HepG2 (cell line): ENCODE measurements at regions of chr3 and their contacts with region 1.

Region 1: GRCh38 chr3:149366941-149367840 is 10.3 kb downstream of the TM4SF1 start:
- DNase-seq: peak; percentile 88
- ATAC-seq: peak; percentile 89
- H3K4me3 ChIP-seq: no peak overlapping the region
- H3K27ac ChIP-seq: peak overlapping the region; percentile 67
- H3K4me1 ChIP-seq: peaks cover 81% of the 10 kb centered on the region
- H3K27me3 ChIP-seq: no peaks in the 10 kb centered on the region
- CTCF ChIP-seq: no peak
- EP300 ChIP-seq: 0 out of 4 replicates have a peak, but pooled peaks of 1 of the 2 experiments have one; percentile 10
- POLR2A ChIP-seq: peak in 1 of 2 experiments; percentile 72; a peak in 1 of 4 replicates
- RAD21 ChIP-seq: no peak

Region 2: DNA sequence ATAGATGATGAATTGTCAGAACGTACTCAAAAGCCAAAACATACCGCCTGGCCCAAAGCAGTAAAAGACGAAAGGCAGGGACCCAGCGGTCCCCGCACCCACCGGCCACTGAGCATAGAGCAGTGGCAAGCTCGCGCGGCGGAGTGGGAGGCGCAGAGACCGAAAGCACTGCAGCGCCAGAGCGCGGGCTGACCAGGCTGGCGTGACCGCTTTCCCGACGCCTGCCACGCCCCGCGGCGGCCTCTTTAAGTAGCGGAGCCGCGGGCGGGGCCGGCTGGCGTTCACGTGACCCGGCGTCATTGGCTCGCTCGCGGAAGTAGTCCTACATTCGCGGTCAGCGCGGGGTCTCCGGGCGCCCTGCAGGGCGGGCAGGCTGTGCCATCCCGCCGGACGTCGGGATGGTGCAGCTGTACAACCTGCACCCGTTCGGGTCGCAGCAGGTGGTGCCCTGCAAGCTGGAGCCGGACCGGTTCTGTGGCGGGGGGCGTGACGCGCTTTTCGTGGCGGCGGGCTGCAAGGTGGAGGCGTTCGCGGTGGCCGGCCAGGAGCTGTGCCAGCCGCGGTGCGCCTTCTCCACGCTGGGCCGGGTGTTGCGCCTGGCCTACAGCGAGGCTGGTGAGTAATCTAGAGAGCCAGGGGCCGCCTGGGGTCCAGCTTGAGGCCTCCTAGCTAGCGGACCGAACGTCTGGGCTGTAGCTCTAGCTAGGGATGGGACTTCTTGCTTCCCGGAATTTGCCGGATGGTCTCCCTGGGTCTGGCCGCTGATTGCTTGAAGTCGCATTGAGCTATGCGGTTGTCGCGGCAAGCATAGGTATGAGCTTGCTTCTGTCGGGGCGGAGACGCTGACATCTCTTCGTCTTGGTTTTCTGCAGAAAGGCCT is 237.6 kb before region 1 on chr3 and contains the start of gene HPS3:
- CTCF ChIA-PET with region 1: no interaction called
- POLR2A ChIA-PET with region 1: no interaction called
- in situ Hi-C with region 1: no loop called
- intact Hi-C with region 1: loop called (anchors 1 kb)
- DNase-seq: peak; percentile 79
- ATAC-seq: peak; percentile 96
- H3K4me3 ChIP-seq: peak within 1 kb of the TSS; percentile 78 to 95 (median 92)
- H3K27ac ChIP-seq: peak within 1 kb of the TSS; percentile 74
- H3K4me1 ChIP-seq: peaks cover 47% of the 10 kb centered on the region
- H3K27me3 ChIP-seq: no peaks in the 10 kb centered on the region; a peak in 1 of 5 replicates
- CTCF ChIP-seq: peak; percentile 16; the same call in 1 of the 2 replicates
- EP300 ChIP-seq: 0 out of 4 replicates have a peak, but pooled peaks of 1 of the 2 experiments have one; percentile 6
- POLR2A ChIP-seq: peak; percentile 90 to 92
- RAD21 ChIP-seq: peak; percentile 38; the same call in 1 of the 2 replicates
- total RNA-seq, gene HPS3: 18.9 and 23.6 TPM in 2 replicates

Region 3: DNA sequence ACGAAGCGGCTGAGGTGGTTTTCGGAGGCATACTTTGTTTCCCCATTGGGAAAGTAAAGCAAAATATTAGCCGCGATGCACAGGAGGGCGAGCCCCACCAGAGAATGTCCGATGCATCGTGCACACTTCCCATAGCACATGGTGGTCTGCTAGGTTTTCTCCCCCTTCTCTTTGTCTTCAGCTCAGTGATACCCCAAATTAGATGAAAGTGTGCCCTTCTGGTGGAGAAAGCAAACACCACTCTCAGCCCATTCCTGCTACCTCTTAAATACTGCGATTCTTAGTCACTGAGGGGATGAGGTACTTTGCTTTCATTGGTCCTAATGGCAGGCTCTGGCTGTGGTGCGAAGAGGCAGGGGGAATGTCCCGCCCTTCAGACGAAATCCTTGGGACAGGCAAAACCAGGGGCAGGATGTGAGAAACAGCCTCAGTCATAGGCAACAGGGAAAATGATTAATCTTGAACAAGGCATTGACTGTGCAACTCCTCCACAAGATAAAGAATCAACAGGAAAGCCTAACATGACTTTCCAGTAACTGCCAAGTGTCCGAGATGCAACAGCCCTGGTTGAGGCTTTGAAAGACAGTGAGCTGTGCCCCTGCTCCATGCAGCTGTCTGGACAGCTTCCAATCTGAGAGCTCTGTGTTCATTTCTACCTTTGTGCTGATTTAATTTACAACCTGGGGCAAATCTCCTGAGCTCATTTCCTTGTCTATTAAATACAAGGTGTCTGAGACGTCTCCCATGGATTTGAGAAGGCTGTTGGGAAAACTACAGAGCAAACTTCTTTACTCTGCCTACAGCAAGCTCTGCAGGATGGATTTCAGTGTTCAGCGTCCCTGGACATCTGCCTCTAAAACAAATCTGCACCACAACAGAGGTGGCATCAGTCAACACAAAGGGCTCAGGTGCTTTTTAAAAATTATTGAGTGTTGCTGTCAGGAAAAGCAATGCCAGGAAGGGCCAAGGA is 10.5 kb after region 1 on chr3 and contains the start of gene TM4SF1:
- CTCF ChIA-PET with region 1: no interaction called
- POLR2A ChIA-PET with region 1: interaction called, 21 read pairs
- in situ Hi-C with region 1: no loop called
- intact Hi-C with region 1: loop called (anchors 1 kb)
- DNase-seq: peak; percentile 97
- ATAC-seq: peak; percentile 91
- H3K4me3 ChIP-seq: peak within 1 kb of the TSS; percentile 78 to 97 (median 82)
- H3K27ac ChIP-seq: peak within 1 kb of the TSS; percentile 92
- H3K4me1 ChIP-seq: peaks cover 61% of the 10 kb centered on the region
- H3K27me3 ChIP-seq: peaks cover 0 to 3% of the 10 kb centered on the region in 2 experiments; a peak in 1 of 5 replicates
- CTCF ChIP-seq: no peak
- EP300 ChIP-seq: peak; percentile 73 to 80; a peak in 3 of 4 replicates
- POLR2A ChIP-seq: peak; percentile 96 to 100
- RAD21 ChIP-seq: no peak; the same call in 1 of the 2 replicates
- total RNA-seq, gene TM4SF1: 226 and 431 TPM in 2 replicates

Region 4: GRCh38 chr3:149384911-149385321 is 17.7 kb after region 1 on chr3:
- CTCF ChIA-PET with region 1: no interaction called
- POLR2A ChIA-PET with region 1: interaction called, 265 read pairs
- in situ Hi-C with region 1: no loop called
- intact Hi-C with region 1: loop called (anchors 2 kb)
- DNase-seq: peak; percentile 78
- ATAC-seq: peak; percentile 23
- H3K4me3 ChIP-seq: peak overlapping the region; percentile 42 to 69 (median 66)
- H3K27ac ChIP-seq: peak overlapping the region; percentile 100
- H3K4me1 ChIP-seq: peaks cover 84% of the 10 kb centered on the region
- H3K27me3 ChIP-seq: no peaks in the 10 kb centered on the region; a peak in 1 of 5 replicates
- CTCF ChIP-seq: no peak
- EP300 ChIP-seq: peak in 1 of 2 experiments; percentile 39; a peak in 1 of 4 replicates
- POLR2A ChIP-seq: peak; percentile 63 to 71
- RAD21 ChIP-seq: no peak

Region 5: DNA sequence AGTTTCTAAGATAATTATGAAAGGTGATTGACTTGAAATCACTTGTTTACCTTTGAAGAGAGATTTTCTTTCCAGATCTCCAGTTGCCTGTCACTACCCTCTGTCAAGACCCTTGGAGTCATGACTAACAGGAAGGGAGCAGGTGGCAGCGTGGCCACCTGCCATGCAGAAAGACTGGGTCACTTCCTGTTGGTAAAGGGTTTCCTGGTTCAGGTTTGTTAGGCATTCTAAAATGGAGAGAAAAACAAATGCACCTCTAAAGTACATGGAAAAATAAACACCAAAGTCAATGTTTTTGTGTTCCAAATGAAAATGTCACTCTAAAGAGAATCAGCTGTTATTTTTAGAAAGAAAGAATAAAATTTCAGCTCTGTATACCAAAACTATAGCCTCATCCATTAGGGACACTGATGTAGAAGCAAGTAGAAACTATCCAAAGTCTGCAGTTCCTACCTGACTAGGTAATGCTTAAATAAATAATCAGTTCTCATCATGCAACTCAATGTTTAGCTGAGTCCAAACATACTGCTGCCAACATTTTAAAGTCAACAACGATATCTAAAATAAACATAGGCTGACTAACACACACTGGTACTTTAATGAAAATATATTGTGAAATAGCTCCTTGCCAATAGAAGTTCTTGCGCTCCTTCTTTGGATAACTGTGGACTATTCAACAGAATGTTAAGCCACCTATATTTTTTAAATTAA is 34.2 kb after region 1 on chr3:
- CTCF ChIA-PET with region 1: no interaction called
- POLR2A ChIA-PET with region 1: interaction called, 23 read pairs
- in situ Hi-C with region 1: no loop called
- intact Hi-C with region 1: no loop called
- DNase-seq: peak; percentile 97
- ATAC-seq: peak; percentile 98
- H3K4me3 ChIP-seq: peak overlapping the region in 2 of 3 experiments; percentile 4 to 36; a peak in 1 of 6 replicates
- H3K27ac ChIP-seq: peak overlapping the region; percentile 94
- H3K4me1 ChIP-seq: peaks cover 84% of the 10 kb centered on the region
- H3K27me3 ChIP-seq: no peaks in the 10 kb centered on the region
- CTCF ChIP-seq: no peak
- EP300 ChIP-seq: peak; percentile 91 to 99
- POLR2A ChIP-seq: no peak
- RAD21 ChIP-seq: no peak